Psoas muscle (tissue), 8 donors: ENCODE measurements at regions of chr12 and their contacts with region 1.

Region 1: GRCh38 chr12:44015335-44015941 is 179.6 kb downstream of the TMEM117 start:
- DNase-seq: no peak
- ATAC-seq: peak in 2 of 4 donors; percentile 37 to 63
- H3K4me3 ChIP-seq: no peak overlapping the region
- H3K27ac ChIP-seq: no peak overlapping the region
- H3K4me1 ChIP-seq: no peaks in the 10 kb centered on the region
- H3K27me3 ChIP-seq: no peaks in the 10 kb centered on the region
- CTCF ChIP-seq: peak; percentile 65

Region 2: DNA sequence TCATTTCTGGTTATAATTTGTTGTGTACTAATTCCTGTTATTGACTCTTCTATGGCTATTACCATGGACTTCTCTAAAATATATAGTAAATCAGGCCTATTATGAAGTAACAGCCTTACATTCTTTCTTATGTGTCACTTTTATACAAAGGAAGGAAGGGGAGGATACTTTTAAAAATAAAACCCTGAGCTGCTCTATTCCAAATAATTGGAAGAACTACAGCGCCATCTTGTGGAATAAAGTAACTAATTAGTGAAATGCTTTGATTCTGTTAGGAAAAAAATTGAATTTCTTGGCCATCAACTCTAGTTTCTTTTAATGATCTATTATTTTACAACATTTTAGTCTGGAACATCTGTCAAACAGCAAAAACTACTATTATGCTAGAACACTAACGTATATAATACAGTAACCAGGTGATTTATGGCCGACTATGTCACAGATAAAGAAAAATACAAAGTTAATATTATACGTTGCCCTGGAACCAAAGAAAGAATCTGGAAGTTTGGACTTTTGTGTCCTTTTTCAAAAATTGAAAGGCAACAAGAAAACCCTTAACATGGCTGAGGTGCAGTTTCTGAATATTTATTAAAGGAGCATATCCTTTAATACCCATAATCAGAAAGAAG is 915.6 kb after region 1 on chr12:
- intact Hi-C with region 1: loop called (anchors 5 to 10 kb)
- DNase-seq: no peak
- ATAC-seq: peak in 2 of 4 donors; percentile 41 to 55
- H3K4me3 ChIP-seq: no peak overlapping the region
- H3K27ac ChIP-seq: no peak overlapping the region
- H3K4me1 ChIP-seq: no peaks in the 10 kb centered on the region
- H3K27me3 ChIP-seq: no peaks in the 10 kb centered on the region
- CTCF ChIP-seq: peak; percentile 69